A549 (cell line): ENCODE measurements at regions of chr9 and their contacts with region 1.

Region 1: GRCh38 chr9:94681508-94681907 is 42.2 kb upstream of the FBP1 start:
- DNase-seq: peak; percentile 86
- ATAC-seq: peak; percentile 98 to 99
- H3K4me3 ChIP-seq: no peak overlapping the region
- H3K27ac ChIP-seq: peak overlapping the region; percentile 71 to 82
- H3K4me1 ChIP-seq: peaks cover 16% of the 10 kb centered on the region
- CTCF ChIP-seq: peak; percentile 91
- EP300 ChIP-seq: no peak
- POLR2A ChIP-seq: no peak
- RAD21 ChIP-seq: peak; percentile 94 to 97

Region 2: GRCh38 chr9:94692601-94693000 is 11.1 kb after region 1 on chr9:
- CTCF ChIA-PET with region 1: interaction called, 26 read pairs
- POLR2A ChIA-PET with region 1: interaction called, 4 read pairs
- DNase-seq: peak; percentile 33 to 81
- ATAC-seq: peak; percentile 70 to 88; a peak in 5 of 6 replicates
- H3K4me3 ChIP-seq: no peak overlapping the region
- H3K27ac ChIP-seq: peak overlapping the region; percentile 53 to 69
- H3K4me1 ChIP-seq: peaks cover 27% of the 10 kb centered on the region
- CTCF ChIP-seq: no peak
- EP300 ChIP-seq: no peak
- POLR2A ChIP-seq: no peak
- RAD21 ChIP-seq: no peak

Region 3: GRCh38 chr9:94772639-94773303 is 91.3 kb after region 1 on chr9:
- CTCF ChIA-PET with region 1: interaction called, 18 read pairs
- POLR2A ChIA-PET with region 1: no interaction called
- DNase-seq: no peak
- ATAC-seq: no peak
- H3K4me3 ChIP-seq: no peak overlapping the region
- H3K27ac ChIP-seq: no peak overlapping the region
- H3K4me1 ChIP-seq: no peaks in the 10 kb centered on the region
- CTCF ChIP-seq: no peak
- EP300 ChIP-seq: no peak
- POLR2A ChIP-seq: no peak
- RAD21 ChIP-seq: no peak

Region 4: DNA sequence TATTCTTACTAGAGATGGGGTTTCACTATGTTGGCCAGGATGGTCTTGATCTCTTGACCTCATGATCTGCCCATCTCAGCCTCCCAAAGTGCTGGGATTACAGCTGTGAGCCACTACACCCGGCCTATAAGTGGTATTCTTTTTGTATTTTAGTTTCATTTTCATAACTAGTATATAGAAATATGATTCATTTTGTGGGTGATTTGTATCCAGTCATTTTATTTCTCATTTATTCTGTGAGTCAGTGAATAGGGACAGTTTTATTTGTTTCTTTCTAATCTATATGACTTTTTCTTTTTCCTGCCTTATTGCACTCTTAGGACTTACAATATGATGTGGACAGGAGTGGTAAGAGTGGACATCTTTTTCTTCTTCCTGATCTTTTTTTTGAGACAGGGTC is 157.9 kb after region 1 on chr9:
- CTCF ChIA-PET with region 1: no interaction called
- POLR2A ChIA-PET with region 1: no interaction called
- DNase-seq: no peak
- ATAC-seq: no peak
- H3K4me3 ChIP-seq: no peak overlapping the region
- H3K27ac ChIP-seq: no peak overlapping the region
- H3K4me1 ChIP-seq: no peaks in the 10 kb centered on the region
- CTCF ChIP-seq: no peak
- EP300 ChIP-seq: no peak
- POLR2A ChIP-seq: no peak
- RAD21 ChIP-seq: no peak

Region 5: GRCh38 chr9:95048225-95049087 is 366.9 kb after region 1 on chr9:
- CTCF ChIA-PET with region 1: interaction called, 34 read pairs
- POLR2A ChIA-PET with region 1: no interaction called
- DNase-seq: peak in 1 of 2 experiments; percentile 74
- ATAC-seq: peak; percentile 47 to 67
- H3K4me3 ChIP-seq: peak overlapping the region; percentile 57
- H3K27ac ChIP-seq: peak overlapping the region; percentile 84 to 87
- H3K4me1 ChIP-seq: peaks cover 59% of the 10 kb centered on the region
- CTCF ChIP-seq: no peak
- EP300 ChIP-seq: no peak
- POLR2A ChIP-seq: peak; percentile 53
- RAD21 ChIP-seq: no peak

Region 6: GRCh38 chr9:95127249-95128176 is 446.0 kb after region 1 on chr9:
- CTCF ChIA-PET with region 1: interaction called, 284 read pairs
- POLR2A ChIA-PET with region 1: interaction called, 4 read pairs
- DNase-seq: peak; percentile 74 to 76
- ATAC-seq: peak; percentile 90 to 91
- H3K4me3 ChIP-seq: no peak overlapping the region
- H3K27ac ChIP-seq: peak overlapping the region; percentile 37 to 72; a peak in 5 of 6 replicates
- H3K4me1 ChIP-seq: peaks cover 33% of the 10 kb centered on the region
- CTCF ChIP-seq: peak; percentile 95
- EP300 ChIP-seq: no peak
- POLR2A ChIP-seq: no peak
- RAD21 ChIP-seq: peak; percentile 86 to 92

Region 7: GRCh38 chr9:95175523-95175922 is 494.0 kb after region 1 on chr9:
- CTCF ChIA-PET with region 1: interaction called, 14 read pairs
- POLR2A ChIA-PET with region 1: no interaction called
- DNase-seq: no peak
- ATAC-seq: no peak; a peak in 1 of 6 replicates
- H3K4me3 ChIP-seq: no peak overlapping the region
- H3K27ac ChIP-seq: no peak overlapping the region
- H3K4me1 ChIP-seq: peaks cover 12% of the 10 kb centered on the region; the same call in 1 of the 3 replicates
- CTCF ChIP-seq: no peak
- EP300 ChIP-seq: no peak
- POLR2A ChIP-seq: no peak
- RAD21 ChIP-seq: no peak